A673 (cell line): ENCODE measurements at regions of chr1 and their contacts with region 1.

Region 1: DNA sequence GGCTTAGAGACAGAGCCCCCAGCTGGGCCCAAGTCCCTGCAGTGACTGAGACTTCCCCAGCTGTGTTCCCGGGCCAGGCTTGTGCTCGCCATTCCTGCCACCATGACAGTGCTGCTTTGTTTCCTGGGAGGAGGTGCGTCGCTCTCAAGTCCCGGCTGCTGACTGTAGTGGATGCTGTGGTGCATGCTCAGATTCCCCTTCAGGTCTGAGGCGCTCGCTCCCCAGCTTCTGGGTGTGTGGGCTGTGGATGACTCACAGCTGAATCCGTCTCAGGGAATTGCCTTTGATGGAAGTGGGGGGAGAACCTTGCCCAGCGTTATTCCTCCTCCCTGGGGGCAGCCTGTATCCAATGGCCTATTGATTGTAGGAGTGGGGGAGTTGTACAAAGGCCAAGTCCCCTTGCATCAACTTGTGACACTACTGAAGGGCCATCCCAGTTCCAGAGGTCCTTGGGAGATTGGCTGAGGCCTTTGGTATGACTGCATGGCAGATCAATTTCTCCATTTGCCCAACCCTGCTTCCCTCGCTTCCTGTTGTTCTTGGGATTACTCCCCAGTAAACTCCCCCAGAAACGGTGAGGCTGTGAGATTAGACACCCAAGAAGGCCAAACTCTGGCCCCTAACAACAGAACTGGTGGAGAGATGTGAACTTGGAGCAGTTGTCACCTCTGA is 17.8 kb upstream of the POU3F1 start:
- DNase-seq: peak; percentile 94
- H3K4me3 ChIP-seq: no peak overlapping the region
- H3K27ac ChIP-seq: peak overlapping the region; percentile 96
- H3K4me1 ChIP-seq: peaks cover 96% of the 10 kb centered on the region
- H3K27me3 ChIP-seq: no peaks in the 10 kb centered on the region
- CTCF ChIP-seq: 0 out of 2 replicates have a peak, but pooled peaks have one; percentile 25

Region 2: DNA sequence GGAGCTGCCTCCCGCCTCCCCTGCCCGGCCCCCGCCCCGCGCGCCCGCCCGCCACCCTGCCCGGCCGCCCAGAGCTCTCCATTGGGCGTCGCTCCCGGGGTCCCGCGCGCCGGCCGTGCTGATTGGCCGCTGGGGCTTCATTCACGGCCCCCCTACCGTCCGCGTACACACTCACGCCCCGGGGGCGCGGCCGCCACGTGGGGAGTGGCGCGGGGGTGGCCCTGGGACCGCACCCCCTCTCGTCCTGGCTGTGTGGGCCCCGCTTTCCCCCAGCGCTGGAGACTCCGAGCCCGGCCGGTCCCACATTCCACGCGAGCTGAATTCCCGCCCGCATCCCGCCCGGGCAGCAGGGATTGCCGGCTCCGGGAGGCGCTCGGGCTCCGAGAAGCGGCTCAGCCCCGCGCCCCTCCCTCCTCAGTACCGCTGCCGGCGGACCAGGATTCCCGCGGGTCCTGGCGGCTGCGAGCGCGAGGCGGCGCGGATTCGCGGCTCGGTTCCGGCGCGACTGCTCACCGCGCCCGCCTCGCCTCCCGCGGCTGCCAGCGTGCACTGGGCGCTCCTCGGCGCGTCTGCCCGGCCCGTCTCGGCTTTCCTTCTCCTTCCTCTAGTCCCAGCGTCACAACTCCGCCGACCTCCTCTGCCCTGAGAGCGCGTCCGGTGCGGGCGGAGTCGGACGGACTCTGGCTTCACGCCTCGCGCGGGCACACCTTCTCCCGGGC is 17.3 kb before region 1 on chr1:
- CTCF ChIA-PET with region 1: interaction called, 10 read pairs
- POLR2A ChIA-PET with region 1: interaction called, 5 read pairs
- intact Hi-C with region 1: no loop called
- DNase-seq: peak; percentile 98
- H3K4me3 ChIP-seq: peak overlapping the region; percentile 97
- H3K27ac ChIP-seq: peak overlapping the region; percentile 88
- H3K4me1 ChIP-seq: peaks cover 37% of the 10 kb centered on the region
- H3K27me3 ChIP-seq: no peaks in the 10 kb centered on the region
- CTCF ChIP-seq: 0 out of 2 replicates have a peak, but pooled peaks have one; percentile 20

Region 3: DNA sequence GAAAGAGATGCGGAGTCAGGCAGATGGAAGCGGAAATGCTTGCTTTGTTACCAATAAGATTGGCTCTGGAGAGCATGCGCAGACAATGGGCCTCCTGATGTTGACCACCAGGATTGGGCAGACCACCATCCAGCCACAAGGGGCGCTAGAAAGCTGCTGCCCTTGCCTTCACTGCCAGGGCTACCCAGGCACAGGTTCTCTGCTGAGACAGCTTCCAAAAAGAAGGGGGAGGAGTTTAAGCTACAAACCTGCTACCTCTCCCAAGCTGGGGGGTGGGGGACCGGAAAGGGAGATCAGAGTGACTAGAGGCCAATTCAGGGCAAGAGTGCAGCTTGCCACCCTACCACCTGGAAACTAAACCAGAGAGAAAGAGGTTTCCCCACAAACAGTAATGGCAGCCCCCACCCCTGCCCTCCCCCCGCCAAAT is 425.5 kb after region 1 on chr1:
- CTCF ChIA-PET with region 1: no interaction called
- POLR2A ChIA-PET with region 1: no interaction called
- intact Hi-C with region 1: loop called (anchors 1 kb)
- DNase-seq: peak; percentile 64
- H3K4me3 ChIP-seq: no peak overlapping the region
- H3K27ac ChIP-seq: peak overlapping the region; percentile 17
- H3K4me1 ChIP-seq: peaks cover 31% of the 10 kb centered on the region
- H3K27me3 ChIP-seq: no peaks in the 10 kb centered on the region
- CTCF ChIP-seq: peak; percentile 77

Region 4: GRCh38 chr1:38512789-38513188 is 448.4 kb after region 1 on chr1:
- CTCF ChIA-PET with region 1: no interaction called
- POLR2A ChIA-PET with region 1: no interaction called
- intact Hi-C with region 1: no loop called
- DNase-seq: peak; percentile 46
- H3K4me3 ChIP-seq: no peak overlapping the region
- H3K27ac ChIP-seq: no peak overlapping the region
- H3K4me1 ChIP-seq: peaks cover 45% of the 10 kb centered on the region
- H3K27me3 ChIP-seq: no peaks in the 10 kb centered on the region
- CTCF ChIP-seq: no peak